ENCODE measurements at regions of chr10 and their contacts with region 1.

Region 1: DNA sequence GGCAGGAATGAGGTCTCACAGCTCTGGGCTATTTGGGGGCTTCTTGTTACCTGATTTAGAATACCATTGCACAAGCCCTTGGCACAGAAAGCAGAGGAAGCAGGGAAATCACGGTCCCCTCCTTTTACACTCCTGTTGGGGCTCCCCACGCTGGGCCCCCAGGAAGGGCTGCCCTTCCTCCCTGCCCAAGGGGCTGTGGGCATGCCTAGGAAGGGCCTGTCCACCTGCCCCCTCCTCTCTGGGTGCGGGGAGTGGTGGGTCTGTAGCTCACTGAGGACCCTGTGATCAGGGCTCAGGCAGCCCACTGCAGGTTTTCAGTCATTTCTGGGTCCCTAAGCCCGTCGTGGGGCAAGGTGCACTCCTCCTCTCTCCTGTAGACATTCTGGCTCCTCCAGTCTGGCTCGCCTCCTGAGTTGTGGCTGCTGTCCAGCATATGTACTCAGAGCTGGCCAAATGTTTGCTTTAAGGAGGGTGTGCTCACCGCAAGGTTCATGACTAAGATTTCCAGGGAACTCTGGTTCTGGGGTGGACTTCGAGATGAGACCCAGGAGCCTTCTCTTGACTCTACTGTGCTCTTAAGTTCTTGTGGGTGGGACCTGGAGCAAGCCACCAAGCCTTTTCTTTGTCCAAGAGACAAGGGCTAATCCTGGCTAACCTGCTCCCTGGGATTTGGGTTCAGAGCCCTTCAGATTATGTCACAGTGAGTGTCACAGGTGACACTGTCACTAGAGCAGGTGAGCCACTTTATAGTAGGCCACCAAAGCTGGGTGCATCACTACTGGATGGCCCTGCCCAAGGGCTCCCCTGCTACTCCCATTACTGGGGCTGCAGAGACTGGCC is 56.0 kb downstream of the TACR2 start:
- DNase-seq: peak; percentile 85 to 92
- ATAC-seq: peak; percentile 82
- H3K4me3 ChIP-seq: no peak overlapping the region
- H3K27ac ChIP-seq: peak overlapping the region; percentile 50 to 98
- H3K4me1 ChIP-seq: peaks cover 5 to 13% of the 10 kb centered on the region in 2 donors
- H3K27me3 ChIP-seq: no peaks in the 10 kb centered on the region

Region 2: DNA sequence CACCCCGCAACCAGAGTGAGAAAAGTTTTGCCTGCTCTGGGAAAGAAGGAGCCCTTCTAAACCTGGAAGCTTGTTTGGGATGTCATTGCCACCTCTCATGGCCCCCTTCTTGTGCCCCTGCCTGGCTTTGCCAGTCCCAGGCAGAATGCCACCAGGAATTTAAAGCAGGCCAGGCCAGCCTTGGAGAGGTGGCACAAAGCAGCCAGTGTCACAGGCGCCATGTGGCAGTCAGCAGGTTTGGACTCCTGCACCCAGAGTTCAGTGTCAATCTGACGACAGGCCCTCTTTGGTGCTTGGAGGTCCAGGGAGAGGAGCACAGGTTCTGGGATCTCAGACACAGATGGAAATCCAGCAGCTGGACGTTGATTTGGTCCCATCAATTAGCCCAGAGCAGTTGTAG is 69.7 kb before region 1 on chr10:
- intact Hi-C with region 1: no loop called
- DNase-seq: no peak
- ATAC-seq: no peak
- H3K4me3 ChIP-seq: no peak overlapping the region
- H3K27ac ChIP-seq: no peak overlapping the region
- H3K4me1 ChIP-seq: no peaks in the 10 kb centered on the region
- H3K27me3 ChIP-seq: no peaks in the 10 kb centered on the region

Region 3: DNA sequence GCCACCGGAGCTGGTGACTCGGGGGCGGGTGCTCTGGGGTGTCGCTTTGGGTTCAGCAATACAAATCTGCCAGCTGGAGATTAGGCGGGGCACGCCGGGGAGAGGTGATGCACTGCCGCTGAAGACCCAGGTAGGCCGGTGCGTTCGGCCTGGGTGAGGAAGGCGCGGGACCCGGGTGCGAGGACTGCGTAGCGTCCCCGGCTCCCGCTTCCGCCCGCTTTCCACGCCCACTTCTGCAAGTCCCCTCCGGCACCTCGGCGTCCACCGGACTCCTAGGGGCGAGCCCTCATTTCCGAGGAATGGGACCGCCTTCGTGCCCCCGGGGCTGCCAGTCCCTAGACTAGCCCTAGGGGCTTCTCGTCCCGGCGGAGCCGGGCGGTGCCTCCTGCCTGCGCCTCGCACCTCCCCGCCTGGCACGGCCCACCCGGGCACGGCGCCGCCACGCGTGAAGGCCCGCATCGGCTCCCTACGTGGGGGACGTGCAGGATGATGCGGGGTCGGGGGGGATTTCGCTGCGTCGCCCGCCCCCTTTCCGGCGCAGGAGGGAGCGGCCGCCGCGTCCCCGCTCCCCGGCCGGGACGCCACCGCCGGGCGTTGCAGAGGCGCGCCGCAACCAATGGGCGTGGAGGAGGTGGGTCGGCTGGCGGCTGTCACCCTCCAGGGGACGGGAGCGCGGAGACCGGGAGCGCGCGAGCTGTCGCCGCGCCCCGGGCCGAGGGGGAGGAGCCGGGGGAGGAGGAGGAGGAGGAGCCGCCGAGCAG is 42.4 kb before region 1 on chr10:
- intact Hi-C with region 1: loop called in 1 of 2 experiments (anchors 2 kb)
- DNase-seq: peak; percentile 95 to 97
- ATAC-seq: peak; percentile 95
- H3K4me3 ChIP-seq: peak overlapping the region; percentile 57 to 73
- H3K27ac ChIP-seq: peak overlapping the region; percentile 10 to 97
- H3K4me1 ChIP-seq: peaks cover 0 to 8% of the 10 kb centered on the region in 2 donors
- H3K27me3 ChIP-seq: no peaks in the 10 kb centered on the region

Region 4: GRCh38 chr10:69327463-69328379 is 33.0 kb before region 1 on chr10:
- intact Hi-C with region 1: loop called (anchors 2 to 5 kb)
- DNase-seq: peak; percentile 86 to 87
- ATAC-seq: peak; percentile 83
- H3K4me3 ChIP-seq: peak overlapping the region in 1 of 2 donors; percentile 31
- H3K27ac ChIP-seq: peak overlapping the region; percentile 78 to 94
- H3K4me1 ChIP-seq: peaks cover 7 to 8% of the 10 kb centered on the region in 2 donors
- H3K27me3 ChIP-seq: no peaks in the 10 kb centered on the region

Region 5: DNA sequence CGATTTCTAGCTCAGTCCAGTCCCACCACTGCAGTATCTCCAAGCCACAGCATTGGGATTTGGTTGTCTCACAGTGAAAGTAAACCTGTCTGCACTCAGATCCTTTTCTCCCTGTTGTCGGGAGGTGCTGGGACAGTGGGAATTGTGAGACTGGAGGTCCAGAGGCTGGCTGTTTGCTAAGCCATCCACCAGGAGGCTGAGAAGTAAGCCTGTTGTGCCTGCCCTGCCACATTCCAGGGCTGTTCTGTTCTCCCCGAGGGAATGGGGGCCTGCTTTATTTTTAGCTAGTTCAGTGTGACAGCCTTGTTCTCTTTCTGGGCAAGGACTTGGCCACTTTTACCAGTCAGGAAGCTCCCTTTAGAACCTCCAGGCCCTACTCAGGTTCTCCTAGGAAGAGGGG is 27.5 kb before region 1 on chr10:
- intact Hi-C with region 1: loop called (anchors 2 to 5 kb)
- DNase-seq: peak; percentile 72 to 78
- ATAC-seq: peak; percentile 65
- H3K4me3 ChIP-seq: no peak overlapping the region
- H3K27ac ChIP-seq: peak overlapping the region; percentile 62 to 99
- H3K4me1 ChIP-seq: peaks cover 14 to 16% of the 10 kb centered on the region in 2 donors
- H3K27me3 ChIP-seq: no peaks in the 10 kb centered on the region

Measured in aorta (tissue), 5 donors.